Activated CD4-positive, alpha-beta memory T cell treated with anti-CD3 and anti-CD28 coated beads for 36 hours (primary cell): ENCODE measurements at regions of chr3 and their contacts with region 1.

Region 1: GRCh38 chr3:124084022-124084881 is 92.3 kb upstream of the ROPN1 start:
- DNase-seq: no peak
- H3K4me3 Mint-ChIP-seq: no peak overlapping the region
- H3K27ac Mint-ChIP-seq: no peak overlapping the region
- H3K4me1 Mint-ChIP-seq: no peaks in the 10 kb centered on the region
- H3K27me3 Mint-ChIP-seq: peaks cover 11% of the 10 kb centered on the region

Region 2: DNA sequence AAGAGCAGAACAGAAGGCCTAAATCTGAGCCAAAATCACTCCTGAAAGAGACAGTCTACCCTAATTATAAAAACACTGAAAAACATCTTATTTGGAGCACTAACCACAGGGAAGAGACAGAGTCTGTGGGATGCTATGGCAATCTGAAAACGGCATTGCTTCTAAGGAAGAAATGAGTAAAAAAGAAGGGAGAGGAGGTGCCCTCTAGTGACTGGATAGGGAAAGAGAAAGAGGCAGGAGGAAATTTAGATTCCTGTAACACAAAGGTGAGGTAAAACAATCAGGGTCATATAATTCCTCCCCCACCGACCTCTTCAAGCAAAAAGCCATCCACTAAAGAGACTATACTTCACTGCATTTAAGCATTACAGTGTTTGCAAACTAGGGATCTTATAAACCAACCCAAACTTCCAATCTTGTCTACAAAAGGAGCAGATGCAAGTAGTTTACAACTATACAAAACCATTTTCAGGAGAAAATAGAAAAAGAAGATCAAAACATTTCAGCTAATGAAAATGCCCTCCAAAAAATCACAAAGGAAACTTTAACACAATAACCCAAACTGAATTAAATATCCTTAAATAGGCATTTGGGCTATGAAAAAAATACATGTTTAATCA is 532.0 kb before region 1 on chr3:
- CTCF ChIA-PET with region 1: no interaction called
- POLR2A ChIA-PET with region 1: no interaction called
- intact Hi-C with region 1: no loop called
- DNase-seq: no peak
- H3K4me3 Mint-ChIP-seq: no peak overlapping the region
- H3K27ac Mint-ChIP-seq: no peak overlapping the region
- H3K4me1 Mint-ChIP-seq: peaks cover 2% of the 10 kb centered on the region
- H3K27me3 Mint-ChIP-seq: no peaks in the 10 kb centered on the region

Region 3: DNA sequence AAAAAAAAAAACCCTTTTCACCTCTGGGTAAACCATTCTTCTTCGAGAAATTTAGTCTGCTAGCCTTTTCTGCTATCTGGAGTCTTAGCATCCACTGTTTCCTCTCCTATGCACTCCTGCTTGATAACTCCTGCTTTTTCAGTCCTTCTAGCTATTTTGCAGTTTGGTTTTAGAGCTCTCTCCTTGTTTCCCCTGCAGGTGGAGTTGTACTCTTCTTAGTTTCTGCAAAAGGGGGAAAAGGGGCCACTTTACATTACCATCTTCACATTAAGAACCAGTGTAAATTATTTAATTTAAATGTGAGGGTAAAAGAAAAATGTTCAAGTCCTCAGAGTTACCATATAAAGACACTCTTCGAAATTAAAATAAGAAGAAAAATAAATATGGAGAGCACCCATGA is 176.5 kb before region 1 on chr3:
- CTCF ChIA-PET with region 1: no interaction called
- POLR2A ChIA-PET with region 1: no interaction called
- intact Hi-C with region 1: no loop called
- DNase-seq: no peak
- H3K4me3 Mint-ChIP-seq: no peak overlapping the region
- H3K27ac Mint-ChIP-seq: no peak overlapping the region
- H3K4me1 Mint-ChIP-seq: no peaks in the 10 kb centered on the region
- H3K27me3 Mint-ChIP-seq: peaks cover 3% of the 10 kb centered on the region

Region 4: GRCh38 chr3:124467980-124468902 is 384.0 kb after region 1 on chr3:
- CTCF ChIA-PET with region 1: interaction called, 3 read pairs
- POLR2A ChIA-PET with region 1: no interaction called
- intact Hi-C with region 1: loop called (anchors 10 kb)
- DNase-seq: peak; percentile 46
- H3K4me3 Mint-ChIP-seq: no peak overlapping the region
- H3K27ac Mint-ChIP-seq: no peak overlapping the region
- H3K4me1 Mint-ChIP-seq: no peaks in the 10 kb centered on the region
- H3K27me3 Mint-ChIP-seq: peaks cover 18% of the 10 kb centered on the region

Region 5: GRCh38 chr3:124685481-124685880 is 601.2 kb after region 1 on chr3:
- CTCF ChIA-PET with region 1: no interaction called
- POLR2A ChIA-PET with region 1: no interaction called
- intact Hi-C with region 1: no loop called
- DNase-seq: no peak
- H3K4me3 Mint-ChIP-seq: no peak overlapping the region
- H3K27ac Mint-ChIP-seq: no peak overlapping the region
- H3K4me1 Mint-ChIP-seq: peaks cover 10% of the 10 kb centered on the region
- H3K27me3 Mint-ChIP-seq: peaks cover 11% of the 10 kb centered on the region